ENCODE measurements at regions of chr1 and their contacts with region 1.

Region 1: GRCh38 chr1:92485381-92486257 is 1.1 kb downstream of the GFI1 start:
- DNase-seq: peak; percentile 60 to 89 (median 74)
- ATAC-seq: peak; percentile 77
- H3K4me3 ChIP-seq: peak overlapping the region; percentile 83
- H3K4me3 Mint-ChIP-seq: peak overlapping the region; percentile 91 to 99 (median 94)
- H3K27ac ChIP-seq: peak overlapping the region; percentile 67
- H3K27ac Mint-ChIP-seq: peak overlapping the region; percentile 85 to 93 (median 90)
- H3K4me1 ChIP-seq: peaks cover 14 to 15% of the 10 kb centered on the region in 2 donors
- H3K4me1 Mint-ChIP-seq: peaks cover 26 to 45% (median 37%) of the 10 kb centered on the region in 7 donors
- H3K27me3 ChIP-seq: no peaks in the 10 kb centered on the region
- H3K27me3 Mint-ChIP-seq: peaks cover 0 to 3% (median 0%) of the 10 kb centered on the region in 5 donors

Region 2: GRCh38 chr1:91997607-91998195 is 487.9 kb before region 1 on chr1:
- CTCF ChIA-PET with region 1: no interaction called
- POLR2A ChIA-PET with region 1: no interaction called
- intact Hi-C with region 1: loop called (anchors 10 kb)
- DNase-seq: peak in 7 of 9 donors; percentile 26 to 64 (median 49)
- ATAC-seq: peak; percentile 64
- H3K4me3 ChIP-seq: no peak overlapping the region
- H3K4me3 Mint-ChIP-seq: no peak overlapping the region
- H3K27ac ChIP-seq: no peak overlapping the region
- H3K27ac Mint-ChIP-seq: no peak overlapping the region
- H3K4me1 ChIP-seq: no peaks in the 10 kb centered on the region
- H3K4me1 Mint-ChIP-seq: no peaks in the 10 kb centered on the region
- H3K27me3 ChIP-seq: no peaks in the 10 kb centered on the region
- H3K27me3 Mint-ChIP-seq: peaks cover 0 to 10% (median 0%) of the 10 kb centered on the region in 5 donors

Region 3: GRCh38 chr1:92310185-92310597 is 175.4 kb before region 1 on chr1:
- CTCF ChIA-PET with region 1: interaction called, 6 read pairs
- POLR2A ChIA-PET with region 1: interaction called, 6 read pairs
- intact Hi-C with region 1: loop called (anchors 1 to 2 kb)
- DNase-seq: peak in 5 of 9 donors; percentile 32 to 48 (median 47)
- ATAC-seq: peak; percentile 66
- H3K4me3 ChIP-seq: no peak overlapping the region
- H3K4me3 Mint-ChIP-seq: no peak overlapping the region
- H3K27ac ChIP-seq: no peak overlapping the region
- H3K27ac Mint-ChIP-seq: no peak overlapping the region
- H3K4me1 ChIP-seq: peaks cover 15 to 18% of the 10 kb centered on the region in 2 donors
- H3K4me1 Mint-ChIP-seq: peaks cover 13 to 42% (median 33%) of the 10 kb centered on the region in 7 donors
- H3K27me3 ChIP-seq: no peaks in the 10 kb centered on the region
- H3K27me3 Mint-ChIP-seq: no peaks in the 10 kb centered on the region

Region 4: GRCh38 chr1:92466683-92467352 is 18.8 kb before region 1 on chr1:
- CTCF ChIA-PET with region 1: interaction called, 3 read pairs
- POLR2A ChIA-PET with region 1: interaction called, 17 read pairs
- intact Hi-C with region 1: loop called in 1 of 2 experiments (anchors 2 kb)
- DNase-seq: no peak
- ATAC-seq: no peak
- H3K4me3 ChIP-seq: no peak overlapping the region
- H3K4me3 Mint-ChIP-seq: no peak overlapping the region
- H3K27ac ChIP-seq: no peak overlapping the region
- H3K27ac Mint-ChIP-seq: peak overlapping the region in 6 of 9 donors; percentile 23 to 67 (median 30)
- H3K4me1 ChIP-seq: peaks cover 16 to 17% of the 10 kb centered on the region in 2 donors
- H3K4me1 Mint-ChIP-seq: peaks cover 26 to 58% (median 51%) of the 10 kb centered on the region in 7 donors
- H3K27me3 ChIP-seq: no peaks in the 10 kb centered on the region
- H3K27me3 Mint-ChIP-seq: no peaks in the 10 kb centered on the region

Region 5: DNA sequence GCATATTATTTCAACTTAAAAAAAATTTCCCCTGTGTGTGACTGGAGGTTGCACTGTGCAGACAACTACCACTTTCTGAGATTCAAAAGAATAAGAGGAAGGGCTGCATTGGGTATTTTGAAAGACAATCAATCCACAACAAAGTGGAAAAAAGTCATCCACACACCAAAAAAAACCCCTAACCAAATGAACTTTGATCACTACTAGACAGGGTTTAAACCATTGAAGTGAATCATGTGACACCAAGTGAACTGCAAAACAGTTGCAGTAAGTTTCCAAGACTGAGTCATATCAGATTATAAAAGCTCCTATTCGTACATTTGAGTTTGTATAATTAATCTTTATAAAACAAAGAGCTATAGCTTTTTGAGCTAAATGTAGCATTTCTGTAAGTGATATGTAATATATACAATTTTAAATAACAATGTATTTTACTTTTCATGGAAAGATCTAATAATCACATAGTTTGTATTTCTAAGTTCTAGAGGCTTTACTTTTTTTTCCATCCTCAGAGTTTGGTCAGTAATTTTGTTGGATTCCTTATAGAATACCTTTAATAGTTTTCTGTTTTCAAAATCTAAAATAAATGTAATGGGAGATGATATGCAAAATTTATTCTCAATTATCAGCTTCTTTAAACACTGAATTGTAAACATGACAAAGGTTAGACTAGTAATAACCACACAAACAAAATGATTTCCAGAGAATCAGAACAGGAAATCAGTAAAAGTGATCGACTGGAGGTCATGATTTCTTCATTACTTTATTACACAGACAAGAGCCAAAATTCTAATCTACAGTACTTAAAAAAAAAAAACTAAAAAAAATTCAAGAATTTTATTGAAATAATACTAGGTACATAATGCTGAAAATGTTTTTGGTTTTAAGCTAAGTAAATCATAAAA is 51.6 kb after region 1 on chr1:
- CTCF ChIA-PET with region 1: interaction called, 10 read pairs
- POLR2A ChIA-PET with region 1: interaction called, 89 read pairs
- intact Hi-C with region 1: loop called (anchors 1 kb)
- DNase-seq: peak in 7 of 9 donors; percentile 57 to 80 (median 74)
- ATAC-seq: peak; percentile 90
- H3K4me3 ChIP-seq: peak overlapping the region; percentile 15
- H3K4me3 Mint-ChIP-seq: peak overlapping the region; percentile 51 to 87 (median 81)
- H3K27ac ChIP-seq: peak overlapping the region; percentile 68
- H3K27ac Mint-ChIP-seq: peak overlapping the region; percentile 81 to 97 (median 91)
- H3K4me1 ChIP-seq: peaks cover 24 to 25% of the 10 kb centered on the region in 2 donors
- H3K4me1 Mint-ChIP-seq: peaks cover 19 to 84% (median 75%) of the 10 kb centered on the region in 7 donors
- H3K27me3 ChIP-seq: no peaks in the 10 kb centered on the region
- H3K27me3 Mint-ChIP-seq: no peaks in the 10 kb centered on the region

Region 6: GRCh38 chr1:92831762-92832536 is 346.3 kb after region 1 on chr1 and contains the start of gene RPL5:
- CTCF ChIA-PET with region 1: no interaction called
- POLR2A ChIA-PET with region 1: no interaction called
- intact Hi-C with region 1: loop called in 1 of 2 experiments (anchors 10 kb)
- DNase-seq: peak; percentile 94 to 99 (median 98)
- ATAC-seq: peak; percentile 95
- H3K4me3 ChIP-seq: peak within 1 kb of the TSS; percentile 94
- H3K4me3 Mint-ChIP-seq: peak within 1 kb of the TSS; percentile 94 to 100 (median 98)
- H3K27ac ChIP-seq: peak within 1 kb of the TSS; percentile 94
- H3K27ac Mint-ChIP-seq: peak within 1 kb of the TSS; percentile 98 to 100 (median 99)
- H3K4me1 ChIP-seq: peaks cover 16 to 30% of the 10 kb centered on the region in 2 donors
- H3K4me1 Mint-ChIP-seq: peaks cover 29 to 54% (median 44%) of the 10 kb centered on the region in 7 donors
- H3K27me3 ChIP-seq: no peaks in the 10 kb centered on the region
- H3K27me3 Mint-ChIP-seq: peaks cover 0 to 5% (median 0%) of the 10 kb centered on the region in 5 donors
- total RNA-seq, gene RPL5: 764 to 1,693 (median 1,596) TPM

Region 7: DNA sequence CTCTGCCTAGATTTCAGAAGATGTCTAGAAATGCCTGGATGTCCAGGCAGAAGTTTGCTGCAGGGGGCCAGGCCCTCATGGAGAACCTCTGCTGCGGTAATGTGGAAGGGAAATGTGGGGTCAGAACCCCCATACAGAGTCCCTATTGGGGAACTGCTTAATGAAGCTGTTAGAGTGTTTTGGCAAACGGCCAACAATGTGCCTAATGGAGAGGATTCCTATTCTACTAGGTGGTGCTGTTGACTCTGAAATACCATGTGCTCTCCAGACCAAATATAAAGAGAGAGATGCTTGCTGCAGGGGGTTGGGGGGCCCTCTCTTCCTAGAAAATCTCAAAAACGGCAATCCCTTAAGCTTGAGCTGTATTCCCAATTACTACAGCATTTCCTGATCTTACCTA is 802.9 kb after region 1 on chr1:
- CTCF ChIA-PET with region 1: no interaction called
- POLR2A ChIA-PET with region 1: no interaction called
- intact Hi-C with region 1: no loop called
- DNase-seq: no peak
- ATAC-seq: no peak
- H3K4me3 ChIP-seq: no peak overlapping the region
- H3K4me3 Mint-ChIP-seq: no peak overlapping the region
- H3K27ac ChIP-seq: no peak overlapping the region
- H3K27ac Mint-ChIP-seq: no peak overlapping the region
- H3K4me1 ChIP-seq: no peaks in the 10 kb centered on the region
- H3K4me1 Mint-ChIP-seq: peaks cover 0 to 5% (median 0%) of the 10 kb centered on the region in 7 donors
- H3K27me3 ChIP-seq: no peaks in the 10 kb centered on the region
- H3K27me3 Mint-ChIP-seq: no peaks in the 10 kb centered on the region

Region 8: DNA sequence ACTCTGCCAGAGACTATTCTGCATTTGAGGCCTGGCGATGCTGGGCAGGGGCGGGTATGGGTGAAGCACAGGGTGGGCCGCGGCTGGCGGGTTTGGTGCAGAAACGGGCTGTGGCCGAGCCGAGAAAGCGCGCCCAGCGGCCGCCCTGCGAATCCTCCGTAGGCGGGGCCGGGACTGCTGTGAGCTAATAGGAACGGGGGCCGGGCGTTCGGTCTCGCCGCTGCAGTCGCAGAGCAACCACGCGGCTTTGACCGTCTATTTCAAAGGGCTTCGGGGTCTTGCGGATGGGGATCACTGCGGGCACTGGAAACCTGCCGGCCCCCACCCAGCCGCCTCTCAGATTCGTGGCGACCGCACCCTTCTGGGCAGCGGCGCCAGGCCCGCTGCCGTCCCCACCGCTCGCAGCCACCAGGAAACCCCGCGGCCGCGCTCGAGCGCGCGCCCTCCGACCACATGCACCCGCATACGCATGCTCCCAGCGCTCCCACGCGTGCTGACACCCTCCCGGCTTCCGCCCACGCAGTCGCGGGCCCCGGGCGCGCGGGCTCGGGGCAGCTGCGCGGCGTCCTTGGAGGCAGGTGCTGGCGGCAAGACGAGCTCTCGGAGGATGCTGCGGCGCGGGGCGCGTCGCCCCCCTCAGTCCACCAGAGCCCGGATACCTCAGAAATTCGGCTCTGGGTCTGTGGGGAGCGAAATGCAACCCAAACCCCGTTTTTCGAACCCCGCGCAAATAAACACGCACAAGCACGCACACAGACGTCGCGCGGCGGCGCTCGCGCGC is 1360.8 kb after region 1 on chr1:
- CTCF ChIA-PET with region 1: no interaction called
- POLR2A ChIA-PET with region 1: no interaction called
- intact Hi-C with region 1: loop called in 1 of 2 experiments (anchors 10 kb)
- DNase-seq: peak; percentile 78 to 91 (median 89)
- ATAC-seq: peak; percentile 71
- H3K4me3 ChIP-seq: peak overlapping the region; percentile 90
- H3K4me3 Mint-ChIP-seq: peak overlapping the region; percentile 86 to 97 (median 91)
- H3K27ac ChIP-seq: peak overlapping the region; percentile 88
- H3K27ac Mint-ChIP-seq: peak overlapping the region; percentile 86 to 100 (median 96)
- H3K4me1 ChIP-seq: peaks cover 4 to 16% of the 10 kb centered on the region in 2 donors
- H3K4me1 Mint-ChIP-seq: peaks cover 15 to 36% (median 24%) of the 10 kb centered on the region in 7 donors
- H3K27me3 ChIP-seq: no peaks in the 10 kb centered on the region
- H3K27me3 Mint-ChIP-seq: peaks cover 0 to 13% (median 0%) of the 10 kb centered on the region in 5 donors